Activated T-helper 1 cell treated with anti-CD3 and anti-CD28 coated beads, Interleukin-12 subunit alpha, Interleukin-12 subunit beta, Interleukin-2, Interleukin-4 antibody, amounts not matched to agents 30 ng/mL and 10 ng/mL and 1 ng/mL, durations not matched to agents 14 hours and 24 hours and 36 hours (primary cell): ENCODE measurements at regions of chr14 and their contacts with region 1.

Region 1: DNA sequence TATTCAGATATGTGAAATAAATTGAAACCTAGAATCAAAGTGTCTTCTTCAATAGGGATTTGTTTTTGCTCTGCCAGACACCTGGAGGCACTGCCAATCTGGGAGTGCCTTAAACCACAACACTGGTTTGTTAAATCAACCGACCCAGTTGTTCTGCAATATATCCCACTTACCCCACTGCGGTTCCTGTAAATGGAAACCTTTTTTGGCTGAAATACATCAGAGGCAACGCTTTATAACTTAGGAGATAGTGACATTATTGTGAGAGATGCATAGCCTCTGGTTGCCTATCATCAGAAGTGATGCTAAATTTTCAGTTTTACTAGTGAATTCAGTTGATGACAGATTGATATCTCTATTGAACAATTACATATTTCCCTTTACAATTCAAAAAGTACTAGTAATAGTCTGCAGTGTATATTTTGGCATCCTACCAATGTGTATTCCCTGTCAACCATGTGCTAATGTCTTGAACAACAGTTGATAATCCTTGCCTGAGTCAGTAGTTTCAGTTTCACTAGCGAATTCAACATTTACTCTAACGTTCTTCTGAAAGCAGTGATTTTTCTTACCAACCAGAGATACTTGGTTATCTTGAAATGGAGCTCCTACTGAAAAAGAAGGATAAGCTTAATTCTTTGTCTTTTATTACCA is 30.5 kb downstream of the PPP2R5C start:
- DNase-seq: no peak
- H3K4me3 Mint-ChIP-seq: peak overlapping the region; percentile 52
- H3K27ac Mint-ChIP-seq: peak overlapping the region; percentile 71
- H3K4me1 Mint-ChIP-seq: peaks cover 20% of the 10 kb centered on the region
- H3K27me3 Mint-ChIP-seq: no peaks in the 10 kb centered on the region

Region 2: GRCh38 chr14:101781240-101782061 is 10.6 kb before region 1 on chr14:
- intact Hi-C with region 1: loop called (anchors 1 kb)
- DNase-seq: peak; percentile 12
- H3K4me3 Mint-ChIP-seq: peak overlapping the region; percentile 65
- H3K27ac Mint-ChIP-seq: no peak overlapping the region
- H3K4me1 Mint-ChIP-seq: peaks cover 4% of the 10 kb centered on the region
- H3K27me3 Mint-ChIP-seq: peaks cover 11% of the 10 kb centered on the region

Region 3: GRCh38 chr14:102192664-102193502 is 400.8 kb after region 1 on chr14:
- intact Hi-C with region 1: loop called (anchors 5 kb)
- DNase-seq: no peak
- H3K4me3 Mint-ChIP-seq: no peak overlapping the region
- H3K27ac Mint-ChIP-seq: no peak overlapping the region
- H3K4me1 Mint-ChIP-seq: peaks cover 9% of the 10 kb centered on the region
- H3K27me3 Mint-ChIP-seq: no peaks in the 10 kb centered on the region